CD4-positive, alpha-beta T cell (primary cell): ENCODE measurements at regions of chr2 and their contacts with region 1.

Region 1: GRCh38 chr2:168455648-168456520 is at the start of gene CERS6:
- DNase-seq: peak; percentile 30 to 87 (median 70)
- ATAC-seq: peak; percentile 60
- H3K4me3 ChIP-seq: peak within 1 kb of the TSS; percentile 83
- H3K4me3 Mint-ChIP-seq: peak within 1 kb of the TSS; percentile 90
- H3K27ac ChIP-seq: peak within 1 kb of the TSS in 1 of 2 donors; percentile 18
- H3K27ac Mint-ChIP-seq: peak within 1 kb of the TSS; percentile 64
- H3K4me1 ChIP-seq: peaks cover 16% of the 10 kb centered on the region
- H3K4me1 Mint-ChIP-seq: peaks cover 43% of the 10 kb centered on the region
- H3K27me3 ChIP-seq: no peaks in the 10 kb centered on the region
- H3K27me3 Mint-ChIP-seq: no peaks in the 10 kb centered on the region
- CTCF ChIP-seq: no peak
- total RNA-seq, gene CERS6: 16.9 to 17.9 TPM

Region 2: DNA sequence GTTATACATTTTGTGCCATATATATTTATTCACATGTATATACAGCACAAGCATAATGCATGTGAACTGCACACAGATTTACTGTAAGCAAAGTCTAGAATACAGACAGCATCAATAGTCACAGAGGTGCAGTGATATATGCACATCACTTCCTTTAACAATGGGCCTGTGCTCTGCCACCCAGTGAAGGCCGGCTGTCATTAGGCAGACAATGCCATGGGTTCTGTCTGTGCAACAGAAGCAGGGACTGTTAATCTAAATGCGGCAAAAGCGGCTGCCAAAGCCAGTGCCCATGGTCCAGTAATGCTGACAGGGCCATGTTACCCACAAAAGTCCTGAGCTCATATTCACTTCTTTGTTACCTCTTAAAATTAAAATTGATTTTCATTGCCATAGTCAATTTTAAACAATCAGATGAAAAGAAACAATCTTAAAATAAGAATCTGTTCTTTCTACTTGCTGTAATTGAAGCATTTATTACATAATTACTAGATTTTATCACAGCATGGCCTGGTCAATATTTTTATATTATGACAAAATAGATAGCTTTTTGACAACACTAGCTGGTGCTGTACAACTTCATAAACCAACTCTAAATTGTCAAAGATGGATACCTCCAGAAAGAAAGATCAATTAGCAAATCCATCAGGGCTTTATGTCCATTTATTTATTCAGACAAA is 440.5 kb before region 1 on chr2:
- CTCF ChIA-PET with region 1: no interaction called
- POLR2A ChIA-PET with region 1: no interaction called
- intact Hi-C with region 1: no loop called
- DNase-seq: no peak
- ATAC-seq: no peak
- H3K4me3 ChIP-seq: no peak overlapping the region
- H3K4me3 Mint-ChIP-seq: no peak overlapping the region
- H3K27ac ChIP-seq: no peak overlapping the region
- H3K27ac Mint-ChIP-seq: no peak overlapping the region
- H3K4me1 ChIP-seq: no peaks in the 10 kb centered on the region
- H3K4me1 Mint-ChIP-seq: peaks cover 5% of the 10 kb centered on the region
- H3K27me3 ChIP-seq: no peaks in the 10 kb centered on the region
- H3K27me3 Mint-ChIP-seq: no peaks in the 10 kb centered on the region
- CTCF ChIP-seq: no peak

Region 3: GRCh38 chr2:168293766-168294165 is 162.1 kb before region 1 on chr2:
- CTCF ChIA-PET with region 1: no interaction called
- POLR2A ChIA-PET with region 1: no interaction called
- intact Hi-C with region 1: no loop called
- DNase-seq: peak in 2 of 14 experiments; percentile 1 to 14
- ATAC-seq: no peak
- H3K4me3 ChIP-seq: no peak overlapping the region
- H3K4me3 Mint-ChIP-seq: no peak overlapping the region
- H3K27ac ChIP-seq: no peak overlapping the region
- H3K27ac Mint-ChIP-seq: no peak overlapping the region
- H3K4me1 ChIP-seq: no peaks in the 10 kb centered on the region
- H3K4me1 Mint-ChIP-seq: no peaks in the 10 kb centered on the region
- H3K27me3 ChIP-seq: no peaks in the 10 kb centered on the region
- H3K27me3 Mint-ChIP-seq: no peaks in the 10 kb centered on the region
- CTCF ChIP-seq: no peak

Region 4: GRCh38 chr2:168490015-168490874 is 34.4 kb after region 1 on chr2:
- CTCF ChIA-PET with region 1: no interaction called
- POLR2A ChIA-PET with region 1: interaction called, 6 read pairs
- intact Hi-C with region 1: loop called in 1 of 2 experiments (anchors 2 kb)
- DNase-seq: peak in 9 of 14 experiments; percentile 7 to 58 (median 13)
- ATAC-seq: peak; percentile 75
- H3K4me3 ChIP-seq: peak overlapping the region; percentile 33
- H3K4me3 Mint-ChIP-seq: peak overlapping the region; percentile 57
- H3K27ac ChIP-seq: peak overlapping the region; percentile 23 to 42
- H3K27ac Mint-ChIP-seq: peak overlapping the region; percentile 88
- H3K4me1 ChIP-seq: peaks cover 13% of the 10 kb centered on the region
- H3K4me1 Mint-ChIP-seq: peaks cover 77% of the 10 kb centered on the region
- H3K27me3 ChIP-seq: no peaks in the 10 kb centered on the region
- H3K27me3 Mint-ChIP-seq: no peaks in the 10 kb centered on the region
- CTCF ChIP-seq: no peak

Region 5: GRCh38 chr2:168510125-168510756 is 54.4 kb after region 1 on chr2:
- CTCF ChIA-PET with region 1: no interaction called
- POLR2A ChIA-PET with region 1: no interaction called
- intact Hi-C with region 1: no loop called
- DNase-seq: no peak
- ATAC-seq: no peak
- H3K4me3 ChIP-seq: no peak overlapping the region
- H3K4me3 Mint-ChIP-seq: no peak overlapping the region
- H3K27ac ChIP-seq: no peak overlapping the region
- H3K27ac Mint-ChIP-seq: no peak overlapping the region
- H3K4me1 ChIP-seq: no peaks in the 10 kb centered on the region
- H3K4me1 Mint-ChIP-seq: peaks cover 77% of the 10 kb centered on the region
- H3K27me3 ChIP-seq: no peaks in the 10 kb centered on the region
- H3K27me3 Mint-ChIP-seq: no peaks in the 10 kb centered on the region
- CTCF ChIP-seq: no peak

Region 6: DNA sequence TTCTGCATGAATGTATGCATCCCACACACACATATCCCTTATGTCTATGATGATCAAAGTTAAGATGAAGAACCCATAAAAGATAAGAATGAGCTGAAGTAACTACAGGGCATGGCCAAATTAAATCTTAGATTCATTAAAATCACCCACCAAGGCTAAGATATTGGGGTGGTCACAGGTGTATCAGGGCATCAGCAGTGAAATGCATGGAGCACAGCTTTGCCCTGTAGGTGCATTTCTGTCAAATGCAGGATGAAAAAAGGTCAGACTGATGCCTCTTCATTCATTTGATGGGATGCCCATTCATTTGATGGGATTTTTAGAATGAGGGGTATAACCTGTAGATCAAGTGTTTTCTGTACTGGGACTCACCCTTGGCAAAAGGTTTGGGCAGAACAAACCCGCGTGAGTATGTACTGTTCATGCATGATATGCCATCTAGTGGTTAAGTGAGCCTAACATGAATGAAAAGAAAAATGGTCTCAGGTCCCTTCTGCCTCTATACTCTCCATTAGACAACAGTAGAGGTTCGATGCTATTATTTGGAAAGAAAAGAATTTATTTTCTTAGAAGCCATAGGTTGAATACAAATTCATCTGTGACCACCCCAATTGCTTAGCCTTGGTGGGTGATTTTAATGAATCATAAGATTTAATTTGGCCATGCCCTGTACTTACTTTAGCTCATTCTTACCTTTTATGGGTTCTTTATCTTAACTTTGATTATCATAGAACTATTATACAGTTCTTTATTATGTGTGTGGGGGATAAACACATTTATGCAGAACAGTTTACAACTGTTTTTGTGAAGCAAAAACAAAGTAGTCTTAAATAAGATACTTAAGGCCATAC is 303.3 kb after region 1 on chr2:
- CTCF ChIA-PET with region 1: no interaction called
- POLR2A ChIA-PET with region 1: no interaction called
- intact Hi-C with region 1: loop called (anchors 10 kb)
- DNase-seq: peak in 7 of 14 experiments; percentile 8 to 70 (median 33)
- ATAC-seq: peak; percentile 72
- H3K4me3 ChIP-seq: no peak overlapping the region
- H3K4me3 Mint-ChIP-seq: no peak overlapping the region
- H3K27ac ChIP-seq: no peak overlapping the region
- H3K27ac Mint-ChIP-seq: no peak overlapping the region
- H3K4me1 ChIP-seq: peaks cover 37% of the 10 kb centered on the region
- H3K4me1 Mint-ChIP-seq: peaks cover 50% of the 10 kb centered on the region
- H3K27me3 ChIP-seq: no peaks in the 10 kb centered on the region
- H3K27me3 Mint-ChIP-seq: no peaks in the 10 kb centered on the region
- CTCF ChIP-seq: peak; percentile 77